ENCODE measurements at regions of chr15 and their contacts with region 1.

Region 1: DNA sequence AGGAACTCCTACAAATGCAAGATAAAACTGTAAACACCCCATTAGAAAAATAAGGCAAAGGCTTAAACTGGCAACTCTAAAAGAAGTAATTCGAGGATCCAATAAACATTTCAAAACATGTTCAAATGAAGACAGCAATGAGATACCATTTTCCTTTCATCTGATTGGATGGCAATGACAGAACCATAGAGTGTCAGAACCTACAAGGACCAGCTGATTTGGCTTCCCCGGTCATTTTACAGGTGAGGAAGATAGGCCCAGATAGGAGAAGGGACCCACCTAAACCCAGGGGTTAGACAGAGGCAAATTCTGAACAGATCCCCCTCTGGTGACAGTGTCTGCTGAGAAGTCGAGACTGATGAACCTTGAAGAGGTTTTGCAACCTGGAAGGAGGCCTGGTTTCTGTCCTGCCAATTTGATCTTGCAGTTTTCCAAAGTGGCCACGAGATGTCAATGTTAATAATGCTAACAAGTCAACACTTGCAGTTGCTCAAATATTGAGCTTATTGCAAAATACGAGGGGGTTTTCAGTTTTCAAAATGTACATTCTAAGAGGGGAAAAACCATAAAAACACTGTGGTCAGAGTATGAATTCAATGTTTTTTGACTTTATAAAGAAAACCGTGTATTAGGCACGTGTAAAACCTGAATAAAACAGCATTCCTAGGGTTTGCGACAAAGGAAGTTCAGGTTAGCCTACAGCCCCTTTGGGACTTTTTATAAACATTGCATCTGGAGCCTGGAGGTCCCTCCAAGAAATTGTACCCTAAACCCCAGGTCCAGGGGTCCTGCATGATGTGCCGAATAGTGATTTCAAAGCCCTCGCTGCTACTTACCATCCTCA is 21.5 kb downstream of the CFAP161 start:
- DNase-seq: peak in 4 of 5 donors; percentile 8 to 23 (median 14)
- H3K4me3 ChIP-seq: no peak overlapping the region
- H3K4me3 Mint-ChIP-seq: no peak overlapping the region
- H3K27ac ChIP-seq: no peak overlapping the region
- H3K27ac Mint-ChIP-seq: no peak overlapping the region
- H3K4me1 ChIP-seq: no peaks in the 10 kb centered on the region
- H3K4me1 Mint-ChIP-seq: peaks cover 0 to 2% (median 1%) of the 10 kb centered on the region in 4 donors
- H3K27me3 ChIP-seq: no peaks in the 10 kb centered on the region
- H3K27me3 Mint-ChIP-seq: peaks cover 2% of the 10 kb centered on the region in 2 donors

Region 2: GRCh38 chr15:81336568-81336967 is 181.0 kb after region 1 on chr15:
- CTCF ChIA-PET with region 1: interaction called, 14 read pairs
- POLR2A ChIA-PET with region 1: no interaction called
- intact Hi-C with region 1: loop called (anchors 10 kb)
- DNase-seq: peak in 4 of 5 donors; percentile 31 to 54 (median 40)
- H3K4me3 ChIP-seq: no peak overlapping the region
- H3K4me3 Mint-ChIP-seq: peak overlapping the region in 1 of 8 donors; percentile 17
- H3K27ac ChIP-seq: no peak overlapping the region
- H3K27ac Mint-ChIP-seq: peak overlapping the region in 2 of 7 donors; percentile 28 to 77
- H3K4me1 ChIP-seq: no peaks in the 10 kb centered on the region
- H3K4me1 Mint-ChIP-seq: peaks cover 0 to 7% (median 2%) of the 10 kb centered on the region in 4 donors
- H3K27me3 ChIP-seq: no peaks in the 10 kb centered on the region
- H3K27me3 Mint-ChIP-seq: peaks cover 0 to 2% of the 10 kb centered on the region in 2 donors

Measured in CD4-positive, alpha-beta memory T cell (primary cell).